Left ventricle myocardium inferior (tissue), 1 donor: ENCODE measurements at regions of chr6 and their contacts with region 1.

Region 1: DNA sequence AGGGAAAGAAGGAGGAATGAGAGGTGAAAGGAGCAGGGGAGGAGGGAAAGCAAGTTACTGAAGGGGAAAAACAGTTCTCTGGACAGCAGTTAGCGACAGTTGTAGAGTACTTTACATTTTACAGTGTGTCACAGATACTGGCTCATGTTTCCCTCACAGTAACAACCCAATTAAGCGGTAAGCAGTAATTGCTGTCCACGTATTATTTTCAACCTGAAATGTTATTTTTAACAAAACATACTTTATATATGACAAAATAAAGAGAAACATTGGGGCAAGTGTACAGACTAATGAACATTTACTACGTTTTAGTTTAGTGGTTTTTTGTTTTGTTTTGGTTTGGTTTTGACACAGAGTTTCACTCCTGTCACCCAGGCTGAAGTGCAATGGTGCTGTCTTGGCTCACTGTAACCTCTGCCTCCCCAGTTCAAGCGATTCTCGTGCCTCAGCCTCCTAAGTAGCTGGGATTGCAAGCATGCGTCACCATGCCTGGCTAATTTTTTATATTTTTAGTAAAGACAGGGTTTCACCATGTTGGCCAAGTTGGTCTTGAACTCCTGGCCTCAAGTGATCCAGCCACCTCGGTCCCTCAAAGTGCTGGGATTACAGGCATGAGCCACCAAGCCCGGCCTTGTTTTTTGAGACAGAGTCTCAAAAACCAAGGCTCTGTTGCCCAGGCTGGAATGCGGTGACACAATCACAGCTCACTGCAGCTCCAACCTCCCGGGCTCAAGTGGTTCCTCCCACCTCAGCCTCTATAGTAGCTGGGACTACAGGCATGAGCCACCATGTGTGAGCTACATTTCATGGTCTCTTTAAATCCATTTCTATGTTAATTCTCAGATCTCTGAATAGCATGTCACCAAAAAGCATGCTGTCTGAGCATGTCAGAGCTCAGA is 22.6 kb upstream of the BTN3A2 start:
- DNase-seq: no peak
- H3K4me3 ChIP-seq: no peak overlapping the region
- H3K27ac ChIP-seq: no peak overlapping the region
- H3K4me1 ChIP-seq: no peaks in the 10 kb centered on the region
- H3K27me3 ChIP-seq: peaks cover 39% of the 10 kb centered on the region
- CTCF ChIP-seq: no peak

Region 2: DNA sequence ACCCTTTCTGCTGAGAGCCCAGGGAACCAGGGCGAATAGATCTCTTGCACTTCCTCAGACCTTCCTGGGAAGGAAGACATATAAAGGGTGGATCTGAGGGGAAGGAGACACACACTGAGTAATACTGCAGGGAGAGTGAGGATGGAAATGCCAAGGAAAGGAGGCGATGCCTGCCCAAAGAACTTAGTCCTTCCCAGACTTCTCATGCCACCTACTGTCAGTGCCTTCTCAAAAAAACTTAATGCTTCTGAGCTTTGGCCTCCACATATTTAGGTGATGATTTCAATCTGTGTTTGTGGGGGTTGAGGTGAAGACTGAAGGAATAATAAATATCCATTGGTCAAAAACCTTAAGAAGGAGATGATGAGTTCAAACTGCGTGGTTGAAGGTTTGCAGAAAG is 69.4 kb after region 1 on chr6:
- intact Hi-C with region 1: no loop called
- DNase-seq: no peak
- H3K4me3 ChIP-seq: no peak overlapping the region
- H3K27ac ChIP-seq: no peak overlapping the region
- H3K4me1 ChIP-seq: no peaks in the 10 kb centered on the region
- H3K27me3 ChIP-seq: no peaks in the 10 kb centered on the region
- CTCF ChIP-seq: no peak

Region 3: DNA sequence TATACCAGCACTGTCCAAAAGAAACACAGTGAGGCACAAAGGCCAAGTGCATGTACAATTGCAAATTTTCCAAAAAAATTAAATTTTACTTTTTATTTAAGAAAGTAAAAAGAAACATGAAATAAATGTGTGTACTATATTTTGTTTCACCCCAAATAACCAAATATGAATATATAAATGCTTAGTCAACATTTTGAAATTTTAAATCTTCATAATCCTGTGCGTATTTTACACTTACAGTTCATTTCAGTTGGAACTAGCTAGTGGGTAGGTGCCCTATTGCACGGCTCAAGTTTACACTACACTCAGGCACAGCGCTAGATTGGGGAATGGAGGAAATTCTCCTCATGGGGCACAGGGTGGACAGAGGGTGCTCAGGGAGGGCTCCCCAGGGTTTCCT is 80.0 kb after region 1 on chr6:
- intact Hi-C with region 1: no loop called
- DNase-seq: no peak
- H3K4me3 ChIP-seq: peak overlapping the region; percentile 90
- H3K27ac ChIP-seq: no peak overlapping the region
- H3K4me1 ChIP-seq: peaks cover 44% of the 10 kb centered on the region
- H3K27me3 ChIP-seq: no peaks in the 10 kb centered on the region
- CTCF ChIP-seq: no peak

Region 4: DNA sequence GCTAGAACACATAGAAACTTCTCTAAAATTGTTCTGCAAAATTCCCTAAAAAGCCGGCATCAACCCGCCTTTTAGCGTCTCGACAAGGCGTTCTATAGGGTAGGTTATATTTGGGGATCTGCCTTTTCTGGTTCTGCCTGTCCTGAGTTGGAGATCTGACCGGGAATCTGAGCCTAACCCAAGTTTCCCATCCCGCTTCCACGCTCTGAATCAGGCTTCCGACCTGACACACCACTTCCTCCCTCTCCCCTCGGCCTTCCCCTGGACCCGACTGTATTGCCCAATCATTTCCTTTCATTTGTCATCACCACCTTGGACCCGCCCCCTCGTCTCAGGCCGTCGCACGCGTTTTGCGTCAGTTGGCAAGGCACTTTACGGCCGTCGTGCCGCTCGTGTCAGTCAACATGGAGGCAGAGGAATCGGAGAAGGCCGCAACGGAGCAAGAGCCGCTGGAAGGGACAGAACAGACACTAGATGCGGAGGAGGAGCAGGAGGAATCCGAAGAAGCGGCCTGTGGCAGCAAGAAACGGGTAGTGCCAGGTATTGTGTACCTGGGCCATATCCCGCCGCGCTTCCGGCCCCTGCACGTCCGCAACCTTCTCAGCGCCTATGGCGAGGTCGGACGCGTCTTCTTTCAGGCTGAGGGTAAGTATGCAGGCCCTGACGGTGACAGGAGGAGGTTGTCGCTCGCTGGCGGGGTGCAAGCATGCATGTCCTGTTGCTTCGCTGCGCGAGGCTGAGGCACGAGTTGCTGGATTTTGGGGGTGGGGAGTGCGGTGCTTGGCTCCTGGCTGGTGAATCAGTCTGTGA is 254.4 kb after region 1 on chr6 and contains the start of gene ABT1:
- intact Hi-C with region 1: loop called (anchors 5 kb)
- DNase-seq: peak; percentile 97
- H3K4me3 ChIP-seq: peak within 1 kb of the TSS; percentile 88
- H3K27ac ChIP-seq: peak within 1 kb of the TSS; percentile 88
- H3K4me1 ChIP-seq: peaks cover 35% of the 10 kb centered on the region
- H3K27me3 ChIP-seq: peaks cover 30% of the 10 kb centered on the region
- CTCF ChIP-seq: no peak
- total RNA-seq, gene ABT1: 8.3 TPM